Activated naive CD4-positive, alpha-beta T cell treated with anti-CD3 and anti-CD28 coated beads, Interleukin-2, amount 10 ng/mL, durations not matched to agents 7 days and 5 days (primary cell): ENCODE measurements at regions of chr12 and their contacts with region 1.

Region 1: GRCh38 chr12:109518820-109519665 is 41.6 kb downstream of the UBE3B start:
- DNase-seq: peak; percentile 75
- H3K4me3 Mint-ChIP-seq: no peak overlapping the region
- H3K27ac Mint-ChIP-seq: no peak overlapping the region
- H3K4me1 Mint-ChIP-seq: no peaks in the 10 kb centered on the region
- H3K27me3 Mint-ChIP-seq: no peaks in the 10 kb centered on the region

Region 2: GRCh38 chr12:109539508-109539907 is 20.5 kb after region 1 on chr12:
- CTCF ChIA-PET with region 1: interaction called, 13 read pairs
- DNase-seq: no peak
- H3K4me3 Mint-ChIP-seq: no peak overlapping the region
- H3K27ac Mint-ChIP-seq: no peak overlapping the region
- H3K4me1 Mint-ChIP-seq: peaks cover 2% of the 10 kb centered on the region
- H3K27me3 Mint-ChIP-seq: no peaks in the 10 kb centered on the region

Region 3: DNA sequence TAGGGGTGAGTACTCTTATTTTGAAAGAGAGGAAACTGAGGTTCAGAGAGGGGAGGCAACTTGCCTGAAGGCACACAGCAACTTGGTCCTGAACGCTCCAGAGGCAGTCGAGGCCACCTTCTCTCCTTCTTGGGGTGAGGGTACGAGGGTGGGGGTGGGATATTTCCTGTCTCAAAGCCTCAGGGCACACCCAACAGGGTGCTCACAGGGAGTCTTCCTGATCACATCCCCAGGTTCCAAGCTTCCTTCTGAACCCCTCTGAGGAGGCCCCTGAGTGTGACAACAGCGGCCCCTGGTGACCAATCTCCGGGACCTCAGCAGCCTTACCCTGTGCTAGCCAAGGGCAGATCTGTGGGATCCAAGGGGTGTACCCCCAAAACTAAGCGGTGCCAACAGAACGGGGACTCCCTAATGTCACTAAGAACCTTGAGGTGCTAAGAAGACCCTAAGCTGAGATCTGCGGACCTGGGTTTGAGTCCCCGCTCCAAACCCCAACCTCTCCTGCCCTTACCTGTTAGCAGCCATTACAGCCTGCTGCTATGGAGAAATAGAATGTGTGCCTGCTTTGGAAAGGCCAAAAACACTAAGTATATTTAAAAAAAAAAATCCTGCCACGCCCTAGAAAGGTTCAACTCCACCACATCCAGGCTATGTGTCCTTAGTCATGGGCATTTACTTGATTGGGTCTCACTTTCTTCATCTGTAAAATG is 256.3 kb after region 1 on chr12:
- CTCF ChIA-PET with region 1: interaction called, 29 read pairs
- DNase-seq: peak; percentile 83
- H3K4me3 Mint-ChIP-seq: no peak overlapping the region
- H3K27ac Mint-ChIP-seq: no peak overlapping the region
- H3K4me1 Mint-ChIP-seq: peaks cover 10% of the 10 kb centered on the region
- H3K27me3 Mint-ChIP-seq: peaks cover 34% of the 10 kb centered on the region